ENCODE measurements at regions of chr13 and their contacts with region 1.

Region 1: DNA sequence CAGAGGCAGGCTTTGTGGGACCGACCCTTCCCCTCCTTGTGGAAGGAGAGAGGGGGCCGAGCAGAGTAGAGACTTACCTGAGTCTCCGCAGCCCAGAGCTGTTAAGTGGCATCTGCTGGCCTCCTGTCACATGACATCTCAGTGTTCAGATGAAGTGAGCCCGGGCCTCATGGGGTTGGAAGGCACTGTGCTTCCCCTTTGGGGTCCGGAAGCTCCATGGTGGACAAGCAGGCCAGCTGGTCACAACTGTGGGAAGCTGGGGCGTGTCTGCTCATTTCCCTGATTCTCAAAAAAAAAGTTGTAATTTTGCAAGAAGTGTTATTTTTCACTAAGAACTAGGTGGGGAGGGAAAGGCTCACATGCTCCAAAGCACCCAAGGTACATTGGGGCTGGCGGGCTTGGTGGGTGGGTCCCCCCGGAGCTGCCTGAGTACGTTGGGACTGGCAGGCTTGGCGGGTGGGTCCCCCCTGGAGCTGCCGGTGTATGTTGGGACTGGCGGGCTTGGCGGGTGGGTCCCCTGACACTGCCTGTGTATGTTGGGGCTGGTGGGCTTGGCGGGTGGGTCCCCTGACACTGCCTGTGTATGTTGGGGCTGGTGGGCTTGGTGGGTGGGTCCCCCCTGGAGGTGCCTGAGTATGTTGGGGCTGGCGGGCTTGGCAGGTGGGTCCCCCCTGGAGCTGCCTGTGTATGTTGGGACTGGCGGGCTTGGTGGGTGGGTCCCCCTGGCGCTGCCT is 18.2 kb upstream of the DCUN1D2 start:
- DNase-seq: no peak
- H3K4me3 ChIP-seq: no peak overlapping the region
- H3K27ac ChIP-seq: no peak overlapping the region
- H3K4me1 ChIP-seq: no peaks in the 10 kb centered on the region
- H3K27me3 ChIP-seq: no peaks in the 10 kb centered on the region
- CTCF ChIP-seq: no peak
- EP300 ChIP-seq: no peak
- POLR2A ChIP-seq: no peak
- RAD21 ChIP-seq: no peak

Region 2: DNA sequence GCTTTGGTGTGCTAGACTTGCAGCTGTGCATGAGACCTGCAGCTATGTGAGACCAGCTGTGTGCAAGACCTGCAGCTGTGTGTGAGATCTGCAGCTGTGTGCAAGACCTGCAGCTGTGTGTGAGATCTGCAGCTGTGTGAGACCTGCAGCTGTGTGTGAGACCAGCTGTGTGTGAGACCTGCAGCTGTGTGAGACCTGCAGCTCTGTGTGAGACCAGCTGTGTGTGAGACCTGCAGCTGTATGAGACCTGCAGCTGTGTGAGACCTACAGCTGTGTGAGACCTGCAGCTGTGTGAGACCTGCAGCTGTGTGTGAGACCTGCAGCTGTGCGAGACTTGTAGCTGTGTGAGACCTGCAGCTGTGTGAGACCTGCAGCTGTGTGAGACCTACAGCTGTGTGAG is 11.5 kb before region 1 on chr13:
- CTCF ChIA-PET with region 1: interaction called, 4 read pairs
- POLR2A ChIA-PET with region 1: interaction called, 10 read pairs
- DNase-seq: no peak
- H3K4me3 ChIP-seq: no peak overlapping the region
- H3K27ac ChIP-seq: no peak overlapping the region
- H3K4me1 ChIP-seq: peaks cover 0 to 10% (median 7%) of the 10 kb centered on the region in 4 experiments; a peak in 6 of 7 replicates
- H3K27me3 ChIP-seq: no peaks in the 10 kb centered on the region
- CTCF ChIP-seq: no peak
- EP300 ChIP-seq: no peak
- POLR2A ChIP-seq: no peak
- RAD21 ChIP-seq: no peak